ENCODE measurements at regions of chr20 and their contacts with region 1.

Region 1: GRCh38 chr20:8131598-8132483 is at the start of gene PLCB1:
- DNase-seq: peak; percentile 87 to 94
- H3K4me3 ChIP-seq: peak within 1 kb of the TSS; percentile 76
- H3K4me3 Mint-ChIP-seq: peak within 1 kb of the TSS; percentile 84
- H3K27ac Mint-ChIP-seq: peak within 1 kb of the TSS; percentile 93
- H3K4me1 ChIP-seq: peaks cover 53% of the 10 kb centered on the region
- H3K4me1 Mint-ChIP-seq: peaks cover 50% of the 10 kb centered on the region
- H3K27me3 ChIP-seq: no peaks in the 10 kb centered on the region
- H3K27me3 Mint-ChIP-seq: no peaks in the 10 kb centered on the region
- CTCF ChIP-seq: peak; percentile 90 to 96
- total RNA-seq, gene PLCB1: 101 and 105 TPM in 2 replicates

Region 2: DNA sequence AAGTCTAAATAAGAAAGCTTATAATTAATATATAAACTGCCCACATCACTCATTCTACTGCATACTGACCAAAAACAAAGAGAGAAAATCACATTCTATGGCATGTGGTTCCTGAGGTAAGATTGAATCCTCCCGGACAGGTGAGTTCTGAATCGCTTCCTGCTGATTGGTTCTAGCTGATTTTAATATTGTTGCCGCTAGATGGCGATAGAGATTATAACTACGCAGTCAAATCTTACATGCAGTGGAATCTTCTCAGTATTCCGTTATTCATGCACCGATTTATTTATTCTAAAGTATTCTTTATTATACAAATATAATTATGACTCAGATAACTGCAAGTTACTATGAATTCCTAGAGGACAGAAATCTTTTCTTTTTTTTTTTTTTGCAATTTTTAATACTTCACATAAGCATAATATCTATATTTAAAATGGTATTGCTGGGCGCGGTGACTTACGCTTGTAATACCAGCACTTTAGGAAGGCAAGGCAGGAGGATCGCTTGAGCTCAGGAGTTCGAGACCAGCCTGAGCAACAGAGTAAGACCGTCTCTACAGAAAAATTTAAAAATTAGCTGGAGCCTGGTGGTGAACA is 88.1 kb before region 1 on chr20:
- CTCF ChIA-PET with region 1: interaction called, 7 read pairs
- POLR2A ChIA-PET with region 1: interaction called, 4 read pairs
- intact Hi-C with region 1: loop called (anchors 1 kb)
- DNase-seq: peak in 1 of 2 experiments; percentile 80
- H3K4me3 ChIP-seq: no peak overlapping the region
- H3K4me3 Mint-ChIP-seq: no peak overlapping the region
- H3K27ac Mint-ChIP-seq: no peak overlapping the region
- H3K4me1 ChIP-seq: peaks cover 13% of the 10 kb centered on the region
- H3K4me1 Mint-ChIP-seq: peaks cover 35% of the 10 kb centered on the region
- H3K27me3 ChIP-seq: no peaks in the 10 kb centered on the region
- H3K27me3 Mint-ChIP-seq: peaks cover 6% of the 10 kb centered on the region
- CTCF ChIP-seq: peak; percentile 52 to 72

Region 3: DNA sequence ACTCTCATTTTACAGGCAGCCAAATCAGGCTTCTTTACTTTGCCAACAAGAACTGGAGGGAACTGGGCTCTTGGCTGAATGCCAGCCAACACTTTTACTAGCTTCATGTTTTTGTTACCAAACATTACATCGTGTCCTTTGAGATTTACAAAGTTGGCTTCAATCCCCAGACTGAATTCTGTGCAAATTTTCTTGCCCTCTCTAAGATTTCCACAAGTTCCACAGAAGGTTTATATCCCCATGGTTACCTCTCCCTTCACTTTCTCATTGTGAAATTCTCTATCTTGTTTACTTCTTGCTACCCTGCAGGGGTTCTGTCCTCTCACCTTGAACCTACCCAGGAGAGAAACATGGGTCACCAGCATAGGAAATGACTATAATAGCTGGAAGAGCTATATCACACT is 37.4 kb before region 1 on chr20:
- CTCF ChIA-PET with region 1: no interaction called
- POLR2A ChIA-PET with region 1: no interaction called
- intact Hi-C with region 1: no loop called
- DNase-seq: no peak
- H3K4me3 ChIP-seq: no peak overlapping the region
- H3K4me3 Mint-ChIP-seq: no peak overlapping the region
- H3K27ac Mint-ChIP-seq: no peak overlapping the region
- H3K4me1 ChIP-seq: no peaks in the 10 kb centered on the region
- H3K4me1 Mint-ChIP-seq: no peaks in the 10 kb centered on the region
- H3K27me3 ChIP-seq: no peaks in the 10 kb centered on the region
- H3K27me3 Mint-ChIP-seq: peaks cover 2% of the 10 kb centered on the region
- CTCF ChIP-seq: no peak

Region 4: GRCh38 chr20:8156235-8157079 is 24.6 kb after region 1 on chr20:
- CTCF ChIA-PET with region 1: no interaction called
- POLR2A ChIA-PET with region 1: no interaction called
- intact Hi-C with region 1: loop called (anchors 1 kb)
- DNase-seq: no peak
- H3K4me3 ChIP-seq: no peak overlapping the region
- H3K4me3 Mint-ChIP-seq: peak overlapping the region; percentile 16
- H3K27ac Mint-ChIP-seq: peak overlapping the region; percentile 75
- H3K4me1 ChIP-seq: peaks cover 50% of the 10 kb centered on the region
- H3K4me1 Mint-ChIP-seq: peaks cover 35% of the 10 kb centered on the region
- H3K27me3 ChIP-seq: no peaks in the 10 kb centered on the region
- H3K27me3 Mint-ChIP-seq: no peaks in the 10 kb centered on the region
- CTCF ChIP-seq: no peak

Region 5: DNA sequence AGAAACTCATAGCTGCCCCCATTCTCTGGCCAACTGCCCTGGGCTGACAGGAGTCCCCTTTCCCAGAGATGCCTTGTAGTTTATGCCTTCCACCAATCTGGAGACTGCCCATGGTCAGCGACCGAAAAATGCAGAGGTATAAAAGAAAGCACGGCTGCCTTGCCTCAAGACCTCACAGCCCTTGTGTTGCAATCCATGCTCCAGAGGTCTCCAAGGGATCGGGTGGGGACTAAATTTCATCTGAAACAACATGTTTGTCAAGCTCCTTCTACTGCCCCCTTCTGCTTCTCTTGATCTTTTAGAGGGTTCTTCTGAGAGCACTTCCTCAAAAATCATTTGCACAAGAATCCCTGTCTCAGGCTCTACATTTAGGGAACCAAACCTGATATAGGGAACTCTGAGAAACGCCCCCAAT is 129.0 kb after region 1 on chr20:
- CTCF ChIA-PET with region 1: no interaction called
- POLR2A ChIA-PET with region 1: no interaction called
- intact Hi-C with region 1: no loop called
- DNase-seq: no peak
- H3K4me3 ChIP-seq: no peak overlapping the region
- H3K4me3 Mint-ChIP-seq: no peak overlapping the region
- H3K27ac Mint-ChIP-seq: no peak overlapping the region
- H3K4me1 ChIP-seq: 0 out of 2 replicates have a peak, but pooled peaks cover 5% of the 10 kb centered on the region
- H3K4me1 Mint-ChIP-seq: peaks cover 8% of the 10 kb centered on the region
- H3K27me3 ChIP-seq: no peaks in the 10 kb centered on the region
- H3K27me3 Mint-ChIP-seq: no peaks in the 10 kb centered on the region
- CTCF ChIP-seq: no peak

Region 6: GRCh38 chr20:8305449-8305978 is 173.7 kb after region 1 on chr20:
- CTCF ChIA-PET with region 1: interaction called, 3 read pairs
- POLR2A ChIA-PET with region 1: no interaction called
- intact Hi-C with region 1: loop called (anchors 1 kb)
- DNase-seq: peak; percentile 79 to 80
- H3K4me3 ChIP-seq: no peak overlapping the region
- H3K4me3 Mint-ChIP-seq: no peak overlapping the region
- H3K27ac Mint-ChIP-seq: no peak overlapping the region
- H3K4me1 ChIP-seq: no peaks in the 10 kb centered on the region
- H3K4me1 Mint-ChIP-seq: no peaks in the 10 kb centered on the region
- H3K27me3 ChIP-seq: no peaks in the 10 kb centered on the region
- H3K27me3 Mint-ChIP-seq: no peaks in the 10 kb centered on the region
- CTCF ChIP-seq: peak; percentile 74 to 75

Region 7: GRCh38 chr20:8454137-8454712 is 322.4 kb after region 1 on chr20:
- CTCF ChIA-PET with region 1: interaction called, 3 read pairs
- POLR2A ChIA-PET with region 1: no interaction called
- intact Hi-C with region 1: loop called (anchors 2 kb)
- DNase-seq: peak in 1 of 2 experiments; percentile 33
- H3K4me3 ChIP-seq: no peak overlapping the region
- H3K4me3 Mint-ChIP-seq: no peak overlapping the region
- H3K27ac Mint-ChIP-seq: no peak overlapping the region
- H3K4me1 ChIP-seq: no peaks in the 10 kb centered on the region
- H3K4me1 Mint-ChIP-seq: no peaks in the 10 kb centered on the region
- H3K27me3 ChIP-seq: no peaks in the 10 kb centered on the region
- H3K27me3 Mint-ChIP-seq: no peaks in the 10 kb centered on the region
- CTCF ChIP-seq: peak; percentile 44 to 59

Region 8: GRCh38 chr20:8722276-8722928 is 590.6 kb after region 1 on chr20:
- CTCF ChIA-PET with region 1: interaction called, 8 read pairs
- POLR2A ChIA-PET with region 1: no interaction called
- intact Hi-C with region 1: loop called (anchors 1 kb)
- DNase-seq: peak; percentile 62 to 70
- H3K4me3 ChIP-seq: no peak overlapping the region
- H3K4me3 Mint-ChIP-seq: no peak overlapping the region
- H3K27ac Mint-ChIP-seq: no peak overlapping the region
- H3K4me1 ChIP-seq: no peaks in the 10 kb centered on the region
- H3K4me1 Mint-ChIP-seq: no peaks in the 10 kb centered on the region
- H3K27me3 ChIP-seq: no peaks in the 10 kb centered on the region
- H3K27me3 Mint-ChIP-seq: no peaks in the 10 kb centered on the region
- CTCF ChIP-seq: peak; percentile 68 to 77

Measured in Caco-2 (cell line).